ENCODE measurements at regions of chr5 and their contacts with region 1.

Region 1: DNA sequence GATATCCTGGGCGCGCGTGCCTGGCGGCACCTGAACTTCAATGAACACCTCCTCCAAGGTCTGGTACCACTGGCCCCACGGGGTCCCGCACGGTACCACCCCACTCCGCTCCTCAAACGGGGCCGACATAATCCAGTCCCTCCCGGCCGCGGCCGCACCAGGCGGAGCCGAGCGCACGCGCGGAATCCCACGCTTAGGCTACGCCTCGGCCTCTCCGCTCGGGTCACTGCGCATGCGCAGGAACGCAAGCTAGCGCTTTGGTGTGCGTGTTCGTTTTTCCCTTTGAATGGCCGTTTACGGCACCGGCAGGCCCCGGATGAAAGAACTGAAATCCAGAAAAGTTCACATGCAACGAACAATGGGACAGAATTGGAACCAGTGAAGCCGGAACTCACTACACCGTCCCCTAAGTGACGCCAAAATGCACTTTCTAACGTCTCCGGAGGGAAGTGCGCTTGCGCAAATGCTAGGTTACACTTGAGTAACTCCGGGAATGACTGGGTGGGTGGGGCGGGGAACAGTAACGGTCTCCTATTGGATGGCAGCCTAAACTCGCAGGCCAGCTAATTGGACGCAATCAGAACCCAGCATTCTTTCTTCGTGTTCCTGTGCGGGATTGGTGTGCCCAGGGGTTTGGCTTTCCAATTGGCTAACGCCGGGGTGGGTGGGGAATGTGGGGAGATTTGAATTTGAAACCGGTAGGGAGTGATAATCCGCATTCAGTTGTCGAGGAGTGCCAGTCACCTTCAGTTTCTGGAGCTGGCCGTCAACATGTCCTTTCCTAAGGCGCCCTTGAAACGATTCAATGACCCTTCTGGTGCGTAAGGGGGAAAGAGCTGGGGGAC is at the starts of genes HMMR and NUDCD2:
- DNase-seq: peak; percentile 96 to 97
- H3K4me3 ChIP-seq: peak within 1 kb of the TSS; percentile 93 to 99 (median 98)
- H3K27ac ChIP-seq: peak within 1 kb of the TSS; percentile 99
- H3K4me1 ChIP-seq: peaks cover 0 to 7% (median 2%) of the 10 kb centered on the region in 4 experiments; a peak in 4 of 7 replicates
- H3K27me3 ChIP-seq: no peaks in the 10 kb centered on the region
- CTCF ChIP-seq: no peak
- EP300 ChIP-seq: no peak
- POLR2A ChIP-seq: peak; percentile 78 to 88
- RAD21 ChIP-seq: no peak
- total RNA-seq, gene HMMR: 70.6 and 77.3 TPM in 2 replicates
- total RNA-seq, gene NUDCD2: 48.5 and 59.5 TPM in 2 replicates

Region 2: GRCh38 chr5:163408311-163408923 is 51.7 kb before region 1 on chr5:
- CTCF ChIA-PET with region 1: no interaction called
- POLR2A ChIA-PET with region 1: no interaction called
- DNase-seq: peak in 1 of 2 experiments; percentile 75
- H3K4me3 ChIP-seq: no peak overlapping the region
- H3K27ac ChIP-seq: no peak overlapping the region
- H3K4me1 ChIP-seq: no peaks in the 10 kb centered on the region
- H3K27me3 ChIP-seq: no peaks in the 10 kb centered on the region
- CTCF ChIP-seq: peak; percentile 36 to 87 (median 80)
- EP300 ChIP-seq: no peak
- POLR2A ChIP-seq: no peak
- RAD21 ChIP-seq: peak; percentile 92 to 94

Region 3: GRCh38 chr5:163437309-163438182 is 22.6 kb before region 1 on chr5 and contains the start of gene CCNG1:
- CTCF ChIA-PET with region 1: interaction called, 8 read pairs
- POLR2A ChIA-PET with region 1: interaction called, 189 read pairs
- DNase-seq: peak; percentile 92 to 97
- H3K4me3 ChIP-seq: peak within 1 kb of the TSS; percentile 80 to 92 (median 87)
- H3K27ac ChIP-seq: peak within 1 kb of the TSS; percentile 94
- H3K4me1 ChIP-seq: peaks cover 0 to 3% (median 1%) of the 10 kb centered on the region in 4 experiments; a peak in 3 of 7 replicates
- H3K27me3 ChIP-seq: no peaks in the 10 kb centered on the region
- CTCF ChIP-seq: no peak
- EP300 ChIP-seq: no peak; a peak in 1 of 3 replicates
- POLR2A ChIP-seq: peak; percentile 94 to 99
- RAD21 ChIP-seq: no peak
- total RNA-seq, gene CCNG1: 363 and 369 TPM in 2 replicates

Region 4: GRCh38 chr5:163473635-163474243 is 13.6 kb after region 1 on chr5:
- CTCF ChIA-PET with region 1: interaction called, 5 read pairs
- POLR2A ChIA-PET with region 1: interaction called, 14 read pairs
- DNase-seq: no peak
- H3K4me3 ChIP-seq: no peak overlapping the region
- H3K27ac ChIP-seq: no peak overlapping the region
- H3K4me1 ChIP-seq: no peaks in the 10 kb centered on the region
- H3K27me3 ChIP-seq: no peaks in the 10 kb centered on the region
- CTCF ChIP-seq: no peak
- EP300 ChIP-seq: no peak
- POLR2A ChIP-seq: no peak
- RAD21 ChIP-seq: no peak

Region 5: GRCh38 chr5:163489055-163489744 is 29.1 kb after region 1 on chr5:
- CTCF ChIA-PET with region 1: interaction called, 4 read pairs
- POLR2A ChIA-PET with region 1: interaction called, 13 read pairs
- DNase-seq: peak in 1 of 2 experiments; percentile 63
- H3K4me3 ChIP-seq: no peak overlapping the region
- H3K27ac ChIP-seq: no peak overlapping the region
- H3K4me1 ChIP-seq: no peaks in the 10 kb centered on the region
- H3K27me3 ChIP-seq: no peaks in the 10 kb centered on the region
- CTCF ChIP-seq: peak; percentile 29 to 64 (median 49); a peak in 2 of 4 replicates
- EP300 ChIP-seq: no peak
- POLR2A ChIP-seq: no peak
- RAD21 ChIP-seq: peak; percentile 41 to 52

Region 6: DNA sequence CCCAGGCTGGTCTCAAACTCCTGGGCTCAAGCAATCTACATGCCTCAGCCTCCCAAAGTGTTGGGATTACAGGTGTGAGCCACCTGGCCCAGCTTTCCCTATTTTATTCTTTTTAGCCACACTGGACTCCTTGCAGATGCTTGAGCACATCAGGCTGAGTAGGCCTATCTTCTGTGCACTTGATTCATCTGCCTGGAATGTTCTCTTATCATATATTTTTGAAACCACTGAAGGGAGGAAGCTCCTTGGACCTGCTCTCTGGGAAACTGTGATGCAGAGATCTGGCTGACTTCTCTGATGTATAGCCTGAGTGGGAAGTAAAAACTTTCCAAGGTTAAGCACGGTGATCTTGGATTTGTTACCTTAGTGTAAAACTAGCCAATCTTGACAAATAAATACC is 38.7 kb after region 1 on chr5:
- CTCF ChIA-PET with region 1: interaction called, 8 read pairs
- POLR2A ChIA-PET with region 1: interaction called, 76 read pairs
- DNase-seq: no peak
- H3K4me3 ChIP-seq: no peak overlapping the region
- H3K27ac ChIP-seq: no peak overlapping the region
- H3K4me1 ChIP-seq: peaks cover 0 to 7% (median 2%) of the 10 kb centered on the region in 4 experiments; a peak in 3 of 7 replicates
- H3K27me3 ChIP-seq: no peaks in the 10 kb centered on the region
- CTCF ChIP-seq: no peak
- EP300 ChIP-seq: no peak
- POLR2A ChIP-seq: no peak
- RAD21 ChIP-seq: no peak

Region 7: DNA sequence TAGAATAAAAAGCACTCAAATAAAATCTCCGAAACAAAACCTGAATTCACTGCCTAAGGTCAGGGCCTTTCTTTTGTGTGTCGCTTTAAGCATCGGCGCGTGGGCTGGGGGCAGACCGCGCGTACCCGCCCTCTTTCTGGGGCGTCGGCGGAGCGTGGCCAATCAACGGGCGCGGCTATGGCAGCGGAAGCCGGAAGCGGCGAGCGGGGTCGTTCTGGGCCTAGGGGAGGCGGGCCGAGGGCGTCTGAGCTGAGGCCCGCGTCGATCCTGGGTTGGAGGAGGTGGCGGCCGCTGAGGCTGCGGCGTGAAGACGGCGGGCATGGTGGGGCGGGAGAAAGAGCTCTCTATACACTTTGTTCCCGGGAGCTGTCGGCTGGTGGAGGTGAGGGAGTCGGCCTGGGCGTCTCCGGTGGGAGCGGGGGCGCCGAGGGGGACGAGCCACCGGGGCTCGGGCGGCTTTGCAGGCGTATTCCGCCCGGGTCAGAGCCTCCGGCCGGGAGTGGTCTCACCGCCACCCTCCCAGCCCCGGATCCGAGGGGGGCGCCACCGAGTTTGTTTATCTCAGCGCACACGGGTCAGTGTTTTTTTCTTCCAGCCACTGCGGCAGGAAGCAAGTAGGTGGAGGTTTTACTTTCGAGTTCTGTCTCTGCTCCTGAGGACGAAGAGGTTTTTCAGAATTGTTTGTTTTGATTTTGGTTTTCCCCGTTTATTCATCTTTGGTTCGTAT is 45.4 kb after region 1 on chr5 and contains the start of gene MAT2B:
- CTCF ChIA-PET with region 1: interaction called, 8 read pairs
- POLR2A ChIA-PET with region 1: interaction called, 76 read pairs
- DNase-seq: peak; percentile 73 to 89
- H3K4me3 ChIP-seq: peak within 1 kb of the TSS; percentile 67 to 98 (median 89)
- H3K27ac ChIP-seq: peak within 1 kb of the TSS; percentile 89
- H3K4me1 ChIP-seq: peaks cover 0 to 9% (median 5%) of the 10 kb centered on the region in 4 experiments; a peak in 4 of 7 replicates
- H3K27me3 ChIP-seq: no peaks in the 10 kb centered on the region
- CTCF ChIP-seq: peak; percentile 40 to 53 (median 48); a peak in 3 of 4 replicates
- EP300 ChIP-seq: no peak
- POLR2A ChIP-seq: peak; percentile 83 to 89
- RAD21 ChIP-seq: peak in 1 of 2 experiments; percentile 17; a peak in 1 of 4 replicates
- total RNA-seq, gene MAT2B: 64.1 and 65.2 TPM in 2 replicates

Region 8: DNA sequence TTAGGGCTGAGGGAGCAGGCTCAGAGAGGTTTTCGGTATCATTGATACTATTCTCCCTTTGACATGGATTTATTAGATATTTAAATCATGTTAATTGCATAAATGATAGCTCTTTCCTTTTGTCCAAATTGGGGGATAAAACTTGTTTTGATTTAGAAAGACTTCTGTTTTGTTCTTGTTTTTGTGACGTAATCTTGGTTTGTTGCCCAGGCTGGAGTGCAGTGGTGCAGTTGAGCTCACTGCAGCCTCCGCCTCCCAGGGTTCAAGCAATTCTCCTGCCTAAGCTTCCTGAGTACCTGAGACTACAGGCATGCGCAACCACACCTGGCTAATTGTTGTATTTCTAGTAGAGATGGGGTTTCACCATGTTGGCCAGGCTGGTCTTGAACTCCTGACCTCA is 52.4 kb after region 1 on chr5:
- CTCF ChIA-PET with region 1: no interaction called
- POLR2A ChIA-PET with region 1: interaction called, 13 read pairs
- DNase-seq: no peak
- H3K4me3 ChIP-seq: no peak overlapping the region
- H3K27ac ChIP-seq: no peak overlapping the region
- H3K4me1 ChIP-seq: peaks cover 0 to 3% (median 0%) of the 10 kb centered on the region in 4 experiments; a peak in 2 of 7 replicates
- H3K27me3 ChIP-seq: no peaks in the 10 kb centered on the region
- CTCF ChIP-seq: no peak
- EP300 ChIP-seq: no peak
- POLR2A ChIP-seq: no peak
- RAD21 ChIP-seq: no peak